Common myeloid progenitor, CD34-positive (primary cell): ENCODE measurements at regions of chr20 and their contacts with region 1.

Region 1: DNA sequence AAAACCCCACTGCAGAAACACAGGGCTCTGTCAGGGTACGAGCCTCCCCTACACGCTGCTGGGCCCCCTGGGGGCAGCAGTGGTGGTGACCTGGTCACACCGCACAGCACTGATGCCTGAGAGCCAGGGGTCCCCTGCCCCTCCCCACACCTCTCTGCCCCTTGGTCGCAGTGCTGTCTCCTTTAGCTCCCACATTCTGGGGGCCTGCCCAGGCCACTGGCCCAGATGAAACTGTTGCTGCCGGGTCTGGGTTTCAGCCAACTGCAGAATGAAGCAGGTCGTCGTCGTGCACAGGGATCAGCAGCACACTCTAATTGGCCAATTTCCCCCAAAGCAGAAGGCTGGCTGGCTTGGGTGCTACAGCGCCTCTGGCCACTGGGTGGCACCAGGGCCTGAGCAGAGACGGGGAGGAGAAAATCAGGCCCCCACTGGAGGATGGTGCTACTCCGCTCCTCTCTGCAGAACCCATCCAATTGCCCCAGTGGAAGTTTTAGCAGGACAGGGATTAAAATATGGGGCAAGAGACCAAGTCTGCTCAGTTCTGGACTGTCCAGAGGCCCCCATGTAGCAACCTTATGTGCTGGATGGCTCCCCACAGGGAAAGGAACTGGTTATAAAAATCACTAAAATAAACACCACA is 26.1 kb downstream of the DIDO1 start:
- DNase-seq: peak; percentile 77 to 91 (median 89)
- H3K4me3 ChIP-seq: peak overlapping the region in 1 of 7 experiments; percentile 45
- H3K27ac ChIP-seq: no peak overlapping the region
- H3K4me1 ChIP-seq: peaks cover 0 to 15% (median 8%) of the 10 kb centered on the region in 4 experiments
- H3K27me3 ChIP-seq: no peaks in the 10 kb centered on the region

Region 2: DNA sequence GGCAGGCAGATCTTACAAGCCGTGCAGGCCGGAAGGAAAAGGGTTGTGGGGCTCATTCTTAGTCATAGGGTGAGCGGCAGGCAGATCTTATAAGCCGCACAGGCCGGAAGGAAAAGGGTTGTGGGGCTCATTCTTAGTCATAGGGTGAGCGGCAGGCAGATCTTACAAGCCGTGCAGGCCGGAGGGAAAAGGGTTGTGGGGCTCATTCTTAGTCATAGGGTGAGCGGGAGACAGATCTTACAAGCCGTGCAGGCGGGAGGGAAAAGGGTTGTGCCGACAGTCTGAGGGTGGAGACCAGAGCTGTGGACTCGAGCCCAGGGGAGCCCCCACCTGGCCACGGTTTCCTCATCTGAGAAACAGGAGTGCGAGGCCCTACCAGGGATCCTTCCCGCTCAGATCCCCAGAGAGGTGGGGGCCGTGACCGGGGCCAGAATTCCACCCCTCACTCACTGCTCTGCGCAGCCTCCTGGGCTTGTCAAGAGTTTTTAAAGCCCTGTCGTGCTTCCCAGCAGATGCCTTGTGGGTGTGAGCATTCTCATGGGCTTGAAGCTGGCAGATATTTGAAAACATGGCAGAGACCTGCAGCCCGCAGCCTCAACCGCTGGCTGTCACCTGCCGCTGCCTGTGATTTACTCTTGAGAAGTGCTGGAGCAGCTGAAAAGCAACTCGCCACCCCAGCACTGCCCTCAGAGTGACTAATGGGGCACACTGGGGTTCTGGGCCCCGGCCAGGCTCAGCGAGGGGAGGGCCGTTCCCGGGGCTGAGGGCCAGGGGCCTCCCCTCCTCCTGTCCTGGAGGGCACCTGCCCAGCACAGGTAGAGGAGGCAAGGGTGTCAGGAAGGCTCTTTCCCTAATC is 159.7 kb before region 1 on chr20:
- CTCF ChIA-PET with region 1: no interaction called
- POLR2A ChIA-PET with region 1: no interaction called
- DNase-seq: peak; percentile 80 to 95 (median 91)
- H3K4me3 ChIP-seq: peak overlapping the region in 2 of 7 experiments; percentile 28 to 55
- H3K27ac ChIP-seq: peak overlapping the region in 1 of 2 experiments; percentile 54
- H3K4me1 ChIP-seq: peaks cover 0 to 36% (median 28%) of the 10 kb centered on the region in 4 experiments
- H3K27me3 ChIP-seq: no peaks in the 10 kb centered on the region

Region 3: DNA sequence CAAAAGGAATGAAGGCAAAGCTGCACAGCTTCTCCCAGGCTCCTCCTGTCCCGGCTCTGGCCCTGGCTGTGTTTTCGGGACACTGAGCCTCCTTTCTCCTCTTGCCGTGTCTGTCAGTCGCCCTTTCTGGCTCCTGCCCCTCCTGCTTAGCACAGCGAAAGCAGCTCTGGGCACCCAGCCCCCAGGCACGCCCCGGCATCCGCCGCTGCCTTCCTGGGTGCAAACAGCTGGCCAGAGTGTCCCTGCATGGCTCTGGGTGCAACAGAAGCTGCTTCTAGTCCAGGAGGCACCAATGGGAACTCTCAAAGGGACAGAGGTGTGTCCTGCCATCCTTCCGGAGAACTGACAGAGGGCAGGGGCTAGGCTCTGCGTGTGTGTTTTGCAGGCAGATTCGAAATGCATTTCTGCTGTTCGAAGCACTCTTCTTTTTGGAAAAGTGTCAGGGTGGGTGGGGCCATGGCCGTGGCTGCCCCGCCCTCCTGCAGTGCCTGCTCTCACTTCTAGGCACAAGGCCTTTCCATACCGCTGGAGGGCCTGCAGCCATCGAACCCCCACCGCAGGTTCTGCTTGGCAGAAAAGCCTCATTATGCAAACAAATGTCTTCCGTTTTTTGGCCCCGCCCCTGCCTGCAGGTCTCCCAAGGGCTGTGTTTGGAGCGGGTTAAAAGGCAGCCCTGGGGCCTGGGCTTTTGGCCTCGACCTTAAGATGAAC is 67.8 kb before region 1 on chr20:
- CTCF ChIA-PET with region 1: no interaction called
- POLR2A ChIA-PET with region 1: no interaction called
- DNase-seq: peak; percentile 61 to 89 (median 86)
- H3K4me3 ChIP-seq: peak overlapping the region in 4 of 7 experiments; percentile 4 to 37 (median 24)
- H3K27ac ChIP-seq: no peak overlapping the region
- H3K4me1 ChIP-seq: peaks cover 0 to 14% (median 14%) of the 10 kb centered on the region in 4 experiments
- H3K27me3 ChIP-seq: no peaks in the 10 kb centered on the region

Region 4: DNA sequence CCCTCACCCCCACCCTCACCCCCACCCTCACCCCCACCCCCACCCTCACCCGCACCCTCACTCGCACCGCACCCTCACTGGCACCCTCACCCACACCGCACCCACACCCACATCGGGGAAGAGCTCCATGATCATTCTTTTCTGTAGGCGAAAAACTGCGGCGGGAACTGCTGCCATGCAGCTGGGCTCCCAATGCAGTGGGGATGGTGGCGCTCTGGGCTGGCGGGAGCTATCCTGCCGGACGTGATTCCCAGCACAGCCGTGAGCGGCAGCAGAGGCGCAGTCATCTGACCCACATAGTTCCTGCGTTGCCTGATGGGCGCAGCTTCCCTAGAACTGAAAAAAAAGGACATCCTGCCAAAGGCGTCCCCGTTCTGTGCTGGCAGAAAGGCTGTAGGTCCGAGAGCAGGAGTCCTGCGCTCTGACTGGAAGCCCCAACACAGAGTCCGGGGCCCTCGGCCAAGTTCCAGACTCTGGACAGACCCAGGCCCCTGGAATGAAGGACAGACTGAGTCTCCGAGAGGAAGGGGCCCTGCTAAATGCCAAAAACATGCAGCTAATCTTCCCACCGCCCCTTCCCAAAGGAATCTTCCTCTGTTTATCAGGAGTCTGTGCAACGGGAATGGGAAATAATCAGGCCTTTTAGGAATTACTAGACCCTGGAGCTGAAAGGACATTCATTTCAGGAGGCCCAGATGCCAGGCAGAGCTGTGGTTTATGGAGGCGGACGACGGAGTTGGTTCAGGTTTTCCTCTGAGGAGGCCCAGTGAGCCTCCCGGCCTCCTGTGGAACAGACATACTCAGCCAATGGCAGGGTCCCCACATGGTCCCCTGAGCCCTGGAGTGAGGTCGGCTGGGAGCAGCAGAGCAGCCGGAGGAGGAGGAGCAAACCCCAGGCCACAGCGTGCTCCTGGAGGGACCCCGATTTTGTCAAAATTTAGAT is 24.5 kb before region 1 on chr20:
- CTCF ChIA-PET with region 1: interaction called, 27 read pairs
- POLR2A ChIA-PET with region 1: no interaction called
- DNase-seq: peak; percentile 42 to 71 (median 66)
- H3K4me3 ChIP-seq: no peak overlapping the region
- H3K27ac ChIP-seq: peak overlapping the region in 1 of 2 experiments; percentile 25
- H3K4me1 ChIP-seq: peaks cover 0 to 18% (median 5%) of the 10 kb centered on the region in 4 experiments
- H3K27me3 ChIP-seq: peaks cover 0 to under 1% (median 0%) of the 10 kb centered on the region in 5 experiments

Region 5: GRCh38 chr20:62887147-62887859 is 12.9 kb before region 1 on chr20:
- CTCF ChIA-PET with region 1: interaction called, 12 read pairs
- POLR2A ChIA-PET with region 1: interaction called, 4 read pairs
- DNase-seq: peak; percentile 75 to 87 (median 82)
- H3K4me3 ChIP-seq: no peak overlapping the region
- H3K27ac ChIP-seq: no peak overlapping the region
- H3K4me1 ChIP-seq: peaks cover 0 to 8% (median 2%) of the 10 kb centered on the region in 4 experiments
- H3K27me3 ChIP-seq: no peaks in the 10 kb centered on the region

Region 6: GRCh38 chr20:62921119-62921687 is 21.0 kb after region 1 on chr20:
- CTCF ChIA-PET with region 1: interaction called, 155 read pairs
- POLR2A ChIA-PET with region 1: interaction called, 4 read pairs
- DNase-seq: peak; percentile 71 to 84 (median 84)
- H3K4me3 ChIP-seq: no peak overlapping the region
- H3K27ac ChIP-seq: no peak overlapping the region
- H3K4me1 ChIP-seq: peaks cover 34 to 82% (median 75%) of the 10 kb centered on the region in 4 experiments
- H3K27me3 ChIP-seq: no peaks in the 10 kb centered on the region